B cell (primary cell): ENCODE measurements at regions of chrX and their contacts with region 1.

Region 1: GRCh38 chrX:41870719-41871151 is 52.6 kb downstream of the CASK start:
- DNase-seq: no peak
- ATAC-seq: no peak
- H3K4me3 ChIP-seq: no peak overlapping the region
- H3K4me3 Mint-ChIP-seq: no peak overlapping the region
- H3K27ac ChIP-seq: no peak overlapping the region
- H3K27ac Mint-ChIP-seq: no peak overlapping the region
- H3K4me1 ChIP-seq: peaks cover 7 to 20% of the 10 kb centered on the region in 2 donors
- H3K4me1 Mint-ChIP-seq: peaks cover 40% of the 10 kb centered on the region
- H3K27me3 ChIP-seq: no peaks in the 10 kb centered on the region
- H3K27me3 Mint-ChIP-seq: no peaks in the 10 kb centered on the region
- CTCF ChIP-seq: no peak

Region 2: DNA sequence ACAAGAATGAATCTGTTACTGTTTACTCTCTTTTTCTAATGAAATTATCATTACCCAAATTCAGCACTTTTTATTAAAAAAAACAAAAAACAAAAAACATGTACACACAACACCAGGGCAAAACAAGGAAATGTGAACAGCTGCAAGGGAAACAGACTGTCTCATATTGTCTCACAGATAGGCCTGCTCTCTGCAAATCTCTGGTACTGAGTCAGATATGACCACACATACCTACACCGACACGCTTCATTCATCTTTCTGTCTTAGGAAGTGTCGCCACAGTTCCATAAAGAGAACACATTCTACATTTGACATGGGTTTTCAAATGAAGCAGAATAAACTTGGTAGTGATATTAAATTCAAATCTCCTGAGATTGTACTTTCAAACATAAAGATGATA is 274.1 kb before region 1 on chrX:
- CTCF ChIA-PET with region 1: no interaction called
- POLR2A ChIA-PET with region 1: interaction called, 10 read pairs
- intact Hi-C with region 1: no loop called
- DNase-seq: peak; percentile 26
- ATAC-seq: peak; percentile 65
- H3K4me3 ChIP-seq: no peak overlapping the region
- H3K4me3 Mint-ChIP-seq: peak overlapping the region; percentile 52
- H3K27ac ChIP-seq: peak overlapping the region in 1 of 2 donors; percentile 35
- H3K27ac Mint-ChIP-seq: peak overlapping the region; percentile 53
- H3K4me1 ChIP-seq: peaks cover 14 to 28% of the 10 kb centered on the region in 2 donors
- H3K4me1 Mint-ChIP-seq: peaks cover 28% of the 10 kb centered on the region
- H3K27me3 ChIP-seq: no peaks in the 10 kb centered on the region
- H3K27me3 Mint-ChIP-seq: no peaks in the 10 kb centered on the region
- CTCF ChIP-seq: no peak